CD8-positive, alpha-beta memory T cell (primary cell): ENCODE measurements at regions of chr13 and their contacts with region 1.

Region 1: DNA sequence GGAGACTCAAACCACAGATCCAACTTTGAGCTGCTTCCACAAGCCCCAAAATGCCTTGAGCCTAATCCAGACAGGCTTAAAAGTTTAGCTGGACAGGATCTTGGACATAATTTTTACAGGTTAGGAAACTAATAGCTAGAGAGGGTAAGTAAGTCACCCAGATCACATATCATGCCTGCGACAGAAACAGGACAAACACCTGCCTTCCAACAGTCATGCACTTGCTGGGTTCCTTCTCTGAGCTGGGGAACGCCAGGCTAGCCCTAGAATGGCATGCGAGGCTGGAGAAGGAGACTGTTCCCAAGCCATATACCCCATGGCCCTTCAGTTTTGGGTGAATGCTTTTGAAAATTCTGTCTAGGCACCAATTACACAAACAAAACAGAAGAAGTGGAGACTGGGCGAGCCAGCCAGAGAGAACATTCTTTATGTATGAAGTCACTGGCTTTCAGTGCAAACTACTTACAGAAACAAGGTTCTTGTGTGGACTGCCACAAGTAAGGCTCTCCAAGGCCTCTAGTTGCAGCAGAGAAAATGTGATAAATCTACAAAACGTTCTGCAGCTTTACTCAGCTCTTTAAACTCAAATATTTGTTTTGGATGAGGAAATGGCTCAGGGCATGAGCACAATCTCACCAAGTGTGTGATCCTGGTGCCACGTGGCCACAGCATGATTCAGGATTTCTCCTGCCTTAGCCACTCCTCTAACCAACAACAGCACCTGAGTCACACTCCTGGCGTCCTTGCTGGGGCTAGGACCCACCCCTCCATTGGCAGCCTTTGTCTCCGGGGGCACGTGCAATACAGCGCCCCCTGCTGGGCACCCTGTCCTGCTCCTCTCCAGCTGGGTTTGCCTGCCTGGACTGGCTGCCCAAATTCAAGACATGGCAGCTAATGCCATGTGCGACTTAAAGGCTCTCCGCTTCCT is 73.4 kb upstream of the UBL3 start:
- DNase-seq: peak; percentile 23 to 74 (median 39)
- H3K4me3 ChIP-seq: no peak overlapping the region
- H3K4me3 Mint-ChIP-seq: peak overlapping the region in 1 of 7 donors; percentile 18
- H3K27ac ChIP-seq: no peak overlapping the region
- H3K27ac Mint-ChIP-seq: no peak overlapping the region
- H3K4me1 ChIP-seq: peaks cover 5% of the 10 kb centered on the region
- H3K4me1 Mint-ChIP-seq: peaks cover 7 to 52% (median 25%) of the 10 kb centered on the region in 3 donors
- H3K27me3 ChIP-seq: no peaks in the 10 kb centered on the region
- H3K27me3 Mint-ChIP-seq: peaks cover 0 to 2% of the 10 kb centered on the region in 2 donors

Region 2: GRCh38 chr13:29817604-29818378 is 106.0 kb before region 1 on chr13:
- CTCF ChIA-PET with region 1: no interaction called
- POLR2A ChIA-PET with region 1: no interaction called
- DNase-seq: no peak
- H3K4me3 ChIP-seq: no peak overlapping the region
- H3K4me3 Mint-ChIP-seq: peak overlapping the region in 2 of 7 donors; percentile 3 to 5
- H3K27ac ChIP-seq: no peak overlapping the region
- H3K27ac Mint-ChIP-seq: peak overlapping the region in 2 of 8 donors; percentile 61 to 66
- H3K4me1 ChIP-seq: peaks cover 13% of the 10 kb centered on the region
- H3K4me1 Mint-ChIP-seq: peaks cover 44 to 88% (median 72%) of the 10 kb centered on the region in 3 donors
- H3K27me3 ChIP-seq: no peaks in the 10 kb centered on the region
- H3K27me3 Mint-ChIP-seq: no peaks in the 10 kb centered on the region

Region 3: GRCh38 chr13:29908416-29908815 is 15.4 kb before region 1 on chr13:
- CTCF ChIA-PET with region 1: interaction called, 10 read pairs
- POLR2A ChIA-PET with region 1: no interaction called
- DNase-seq: no peak
- H3K4me3 ChIP-seq: no peak overlapping the region
- H3K4me3 Mint-ChIP-seq: no peak overlapping the region
- H3K27ac ChIP-seq: no peak overlapping the region
- H3K27ac Mint-ChIP-seq: no peak overlapping the region
- H3K4me1 ChIP-seq: no peaks in the 10 kb centered on the region
- H3K4me1 Mint-ChIP-seq: peaks cover 7 to 8% (median 8%) of the 10 kb centered on the region in 3 donors
- H3K27me3 ChIP-seq: no peaks in the 10 kb centered on the region
- H3K27me3 Mint-ChIP-seq: no peaks in the 10 kb centered on the region

Region 4: GRCh38 chr13:29961036-29961670 is 37.3 kb after region 1 on chr13:
- CTCF ChIA-PET with region 1: no interaction called
- POLR2A ChIA-PET with region 1: no interaction called
- DNase-seq: no peak
- H3K4me3 ChIP-seq: no peak overlapping the region
- H3K4me3 Mint-ChIP-seq: peak overlapping the region in 3 of 7 donors; percentile 9 to 48 (median 30)
- H3K27ac ChIP-seq: no peak overlapping the region
- H3K27ac Mint-ChIP-seq: peak overlapping the region in 7 of 8 donors; percentile 62 to 90 (median 71)
- H3K4me1 ChIP-seq: peaks cover 12% of the 10 kb centered on the region
- H3K4me1 Mint-ChIP-seq: peaks cover 36 to 56% (median 52%) of the 10 kb centered on the region in 3 donors
- H3K27me3 ChIP-seq: no peaks in the 10 kb centered on the region
- H3K27me3 Mint-ChIP-seq: peaks cover 0 to 3% of the 10 kb centered on the region in 2 donors

Region 5: GRCh38 chr13:30132623-30133553 is 209.1 kb after region 1 on chr13:
- CTCF ChIA-PET with region 1: no interaction called
- POLR2A ChIA-PET with region 1: no interaction called
- DNase-seq: peak; percentile 87 to 97 (median 93)
- H3K4me3 ChIP-seq: peak overlapping the region; percentile 11
- H3K4me3 Mint-ChIP-seq: peak overlapping the region in 6 of 7 donors; percentile 29 to 76 (median 60)
- H3K27ac ChIP-seq: no peak overlapping the region
- H3K27ac Mint-ChIP-seq: peak overlapping the region in 6 of 8 donors; percentile 10 to 96 (median 68)
- H3K4me1 ChIP-seq: peaks cover 15% of the 10 kb centered on the region
- H3K4me1 Mint-ChIP-seq: peaks cover 23 to 30% (median 30%) of the 10 kb centered on the region in 3 donors
- H3K27me3 ChIP-seq: no peaks in the 10 kb centered on the region
- H3K27me3 Mint-ChIP-seq: peaks cover 0 to 2% of the 10 kb centered on the region in 2 donors